Left cardiac atrium (tissue), 4 donors: ENCODE measurements at regions of chr2 and their contacts with region 1.

Region 1: DNA sequence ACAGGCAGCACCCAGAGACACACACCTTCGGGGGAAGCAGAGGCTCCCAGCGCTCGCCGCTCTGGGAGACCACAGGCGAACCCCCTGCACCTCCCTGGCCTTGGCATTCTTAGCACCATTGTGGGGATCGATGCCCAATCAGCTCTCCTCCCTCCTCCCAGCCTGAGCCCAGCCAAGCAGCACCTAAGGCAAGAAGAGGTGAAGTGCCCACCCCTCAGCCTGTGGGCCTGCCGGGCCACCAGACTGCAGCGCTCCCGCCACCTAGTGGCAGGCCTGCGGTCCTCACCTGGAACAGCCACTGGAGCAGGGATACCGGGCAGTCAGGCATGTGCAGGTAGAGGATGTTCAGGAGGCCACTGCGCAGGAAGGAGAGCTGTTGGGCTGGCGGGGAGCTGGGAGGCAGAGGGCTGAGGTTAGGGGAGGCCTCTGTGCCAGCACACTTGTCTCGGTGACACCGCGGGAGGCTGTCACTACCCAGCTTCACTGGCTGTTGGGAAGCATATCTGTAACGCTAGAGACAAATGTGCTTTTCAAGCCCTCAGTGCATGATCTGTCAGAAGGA is 35.2 kb downstream of the FAM178B start:
- DNase-seq: peak; percentile 73
- ATAC-seq: peak; percentile 84 to 88

Region 2: DNA sequence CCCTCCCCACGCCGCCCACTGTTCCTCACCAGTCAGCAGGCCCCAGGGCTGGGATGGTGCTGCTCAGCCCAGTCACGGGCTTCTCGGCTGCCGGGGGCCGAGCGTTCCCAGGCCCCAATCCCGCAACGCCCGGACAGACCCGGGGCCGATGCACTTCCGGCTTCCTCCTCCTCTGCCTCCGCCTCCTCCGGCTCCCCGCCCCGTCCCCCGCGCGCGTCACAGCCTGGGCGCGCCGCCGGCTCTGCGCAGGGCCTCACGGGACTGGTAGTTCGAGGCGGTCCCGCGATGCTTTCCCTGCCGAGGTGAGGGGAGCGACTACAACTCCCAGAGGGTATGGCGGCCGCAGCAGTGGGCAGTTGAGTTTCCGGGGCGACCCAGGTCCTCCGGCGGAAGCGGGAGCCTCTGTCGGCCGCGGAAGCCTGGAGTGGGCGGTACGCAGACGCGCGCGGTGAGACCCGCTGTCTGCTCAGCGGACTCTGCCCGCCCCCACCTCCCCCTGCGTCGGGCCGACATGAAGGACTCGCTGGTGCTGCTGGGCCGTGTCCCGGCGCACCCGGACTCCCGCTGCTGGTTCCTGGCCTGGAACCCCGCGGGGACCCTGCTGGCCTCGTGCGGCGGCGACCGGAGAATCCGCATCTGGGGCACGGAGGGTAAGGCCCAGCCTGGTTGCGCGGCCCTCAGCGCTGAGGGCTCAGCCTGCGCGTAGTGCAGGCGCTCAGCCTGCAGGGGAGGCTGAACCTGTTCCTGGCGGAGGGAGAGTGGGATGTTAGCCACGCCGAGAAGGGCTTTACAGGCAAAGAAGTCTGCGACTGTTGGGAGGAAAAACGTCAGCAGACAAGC is 685.1 kb before region 1 on chr2 and contains the starts of genes CIAO1 and TMEM127:
- intact Hi-C with region 1: no loop called
- DNase-seq: peak; percentile 99
- ATAC-seq: peak; percentile 96 to 97
- total RNA-seq, gene CIAO1: 50.0 to 52.7 TPM
- total RNA-seq, gene TMEM127: 64.4 to 86.6 TPM

Region 3: DNA sequence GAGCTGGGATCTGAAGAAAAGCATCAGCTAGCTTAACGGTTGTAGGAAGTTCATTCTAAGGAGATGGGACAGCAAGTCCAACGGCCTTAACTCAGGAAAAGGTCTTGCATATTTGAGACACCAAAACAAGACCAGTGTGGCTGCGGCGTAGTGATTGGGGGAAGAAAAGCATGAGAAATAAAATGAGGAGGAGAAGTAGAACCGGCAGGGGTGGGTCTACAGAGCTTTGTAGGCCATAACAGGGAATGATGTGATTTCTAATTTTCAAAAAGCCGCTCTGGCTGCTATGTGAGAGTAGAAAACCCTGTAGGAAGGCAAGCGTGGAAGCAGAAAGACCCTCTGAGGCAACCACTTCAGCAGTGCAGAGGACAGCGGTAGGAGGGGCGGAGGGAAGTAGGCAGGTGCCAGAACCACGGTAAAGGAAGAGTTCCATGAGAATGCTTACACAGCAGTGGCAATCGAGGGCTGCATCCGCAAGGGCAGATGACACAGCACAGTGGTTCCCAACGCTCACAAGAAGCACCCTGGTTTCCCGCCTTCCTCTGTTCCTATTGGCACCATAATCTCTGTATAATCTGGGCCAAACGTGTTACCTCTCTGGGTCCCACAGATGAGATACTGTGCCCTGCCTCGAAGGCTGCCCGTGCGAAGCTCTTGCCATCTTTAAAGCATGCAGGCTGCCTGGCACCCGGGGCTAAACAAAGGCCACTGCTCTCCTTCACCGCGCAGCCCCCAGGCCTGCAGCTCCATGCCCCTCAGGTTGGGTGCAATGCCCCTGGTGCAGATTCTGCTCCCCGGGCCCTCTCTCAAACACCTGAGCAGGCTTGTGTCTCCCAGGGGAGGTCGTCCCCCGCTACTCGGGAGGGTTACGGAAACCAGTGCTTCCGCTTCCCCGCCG is 94.1 kb before region 1 on chr2:
- intact Hi-C with region 1: loop called (anchors 2 to 5 kb)
- DNase-seq: no peak
- ATAC-seq: peak in 1 of 2 donors; percentile 2

Region 4: GRCh38 chr2:96907115-96908041 is 43.8 kb before region 1 on chr2:
- intact Hi-C with region 1: loop called in 1 of 2 experiments (anchors 2 kb)
- DNase-seq: peak; percentile 90
- ATAC-seq: peak; percentile 95